A673 (cell line): ENCODE measurements at regions of chr13 and their contacts with region 1.

Region 1: GRCh38 chr13:76903544-76904162 is 17.4 kb upstream of the KCTD12 start:
- DNase-seq: peak; percentile 78
- H3K4me3 ChIP-seq: no peak overlapping the region
- H3K27ac ChIP-seq: no peak overlapping the region
- H3K4me1 ChIP-seq: no peaks in the 10 kb centered on the region
- H3K27me3 ChIP-seq: peaks cover 53% of the 10 kb centered on the region
- CTCF ChIP-seq: peak; percentile 98

Region 2: GRCh38 chr13:75694722-75695121 is 1208.9 kb before region 1 on chr13:
- CTCF ChIA-PET with region 1: interaction called, 5 read pairs
- POLR2A ChIA-PET with region 1: no interaction called
- intact Hi-C with region 1: loop called (anchors 5 kb)
- DNase-seq: no peak
- H3K4me3 ChIP-seq: no peak overlapping the region
- H3K27ac ChIP-seq: no peak overlapping the region
- H3K4me1 ChIP-seq: no peaks in the 10 kb centered on the region
- H3K27me3 ChIP-seq: no peaks in the 10 kb centered on the region
- CTCF ChIP-seq: no peak

Region 3: DNA sequence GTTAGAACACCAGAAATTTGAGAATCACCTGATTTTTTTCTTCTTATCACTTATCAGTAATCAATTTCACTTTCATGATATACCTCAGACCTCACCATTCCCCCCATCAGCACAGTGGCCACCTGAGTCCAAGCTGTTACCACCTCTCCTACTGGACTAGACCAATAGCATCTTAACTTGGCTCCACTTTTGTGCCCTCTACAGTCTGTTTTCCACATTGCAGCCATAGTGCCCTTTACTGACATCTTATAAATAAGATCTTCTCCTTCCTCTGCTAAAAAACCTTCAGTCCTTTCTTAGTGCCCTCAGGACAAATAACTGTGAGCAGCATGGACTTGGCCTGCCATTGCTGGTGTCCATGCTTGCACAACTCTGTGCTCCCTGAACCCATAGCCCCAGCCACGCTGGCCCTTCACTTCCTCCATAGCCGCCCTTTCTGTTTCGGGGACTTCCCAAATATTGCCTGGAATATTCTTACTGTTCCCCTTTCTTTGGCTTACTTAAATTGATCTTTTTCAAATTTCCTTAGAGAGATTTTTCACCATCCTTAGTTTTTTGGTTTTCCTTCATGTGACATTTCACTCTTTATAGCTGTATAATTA is 886.8 kb before region 1 on chr13:
- CTCF ChIA-PET with region 1: no interaction called
- POLR2A ChIA-PET with region 1: no interaction called
- intact Hi-C with region 1: loop called (anchors 5 kb)
- DNase-seq: peak; percentile 48
- H3K4me3 ChIP-seq: no peak overlapping the region
- H3K27ac ChIP-seq: no peak overlapping the region
- H3K4me1 ChIP-seq: no peaks in the 10 kb centered on the region
- H3K27me3 ChIP-seq: peaks cover 7% of the 10 kb centered on the region
- CTCF ChIP-seq: peak; percentile 74

Region 4: GRCh38 chr13:76667551-76667950 is 236.1 kb before region 1 on chr13:
- CTCF ChIA-PET with region 1: interaction called, 4 read pairs
- POLR2A ChIA-PET with region 1: no interaction called
- intact Hi-C with region 1: loop called (anchors 2 kb)
- DNase-seq: peak; percentile 25
- H3K4me3 ChIP-seq: no peak overlapping the region
- H3K27ac ChIP-seq: no peak overlapping the region
- H3K4me1 ChIP-seq: no peaks in the 10 kb centered on the region
- H3K27me3 ChIP-seq: no peaks in the 10 kb centered on the region
- CTCF ChIP-seq: 0 out of 2 replicates have a peak, but pooled peaks have one; percentile 25

Region 5: GRCh38 chr13:76980075-76980718 is 76.5 kb after region 1 on chr13:
- CTCF ChIA-PET with region 1: interaction called, 3 read pairs
- POLR2A ChIA-PET with region 1: no interaction called
- intact Hi-C with region 1: loop called (anchors 5 kb)
- DNase-seq: peak; percentile 77
- H3K4me3 ChIP-seq: peak overlapping the region; percentile 34
- H3K27ac ChIP-seq: no peak overlapping the region
- H3K4me1 ChIP-seq: no peaks in the 10 kb centered on the region
- H3K27me3 ChIP-seq: peaks cover 38% of the 10 kb centered on the region
- CTCF ChIP-seq: peak; percentile 98

Region 6: DNA sequence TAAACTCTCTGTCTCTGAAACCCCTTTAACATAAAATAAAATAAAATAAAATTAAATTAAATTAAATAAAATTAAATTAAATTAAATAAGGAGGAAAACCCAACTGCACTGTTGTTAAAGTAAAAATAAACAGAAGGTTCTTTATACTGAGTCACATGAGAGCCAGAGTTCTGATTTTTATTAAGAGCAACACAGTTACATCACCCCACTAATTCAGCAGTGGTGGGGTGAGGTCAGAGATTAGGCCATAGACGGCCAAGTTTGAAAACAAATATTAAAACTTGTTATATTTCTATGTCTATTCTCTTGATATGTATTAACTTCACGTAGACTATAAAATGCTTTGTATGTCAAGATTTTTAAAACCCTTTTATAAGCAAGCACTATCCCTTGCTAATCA is 363.7 kb after region 1 on chr13:
- CTCF ChIA-PET with region 1: no interaction called
- POLR2A ChIA-PET with region 1: no interaction called
- intact Hi-C with region 1: no loop called
- DNase-seq: no peak
- H3K4me3 ChIP-seq: no peak overlapping the region
- H3K27ac ChIP-seq: no peak overlapping the region
- H3K4me1 ChIP-seq: no peaks in the 10 kb centered on the region
- H3K27me3 ChIP-seq: no peaks in the 10 kb centered on the region
- CTCF ChIP-seq: no peak